ENCODE measurements at regions of chr12 and their contacts with region 1.

Region 1: GRCh38 chr12:6607751-6608591 is 792 bp upstream of the CHD4 start:
- DNase-seq: peak; percentile 49 to 87
- ATAC-seq: peak; percentile 43 to 69 (median 53)
- H3K4me3 ChIP-seq: no peak overlapping the region
- H3K4me3 Mint-ChIP-seq: no peak overlapping the region
- H3K27ac ChIP-seq: peak overlapping the region; percentile 97
- H3K27ac Mint-ChIP-seq: no peak overlapping the region
- H3K4me1 ChIP-seq: peaks cover 59% of the 10 kb centered on the region
- H3K4me1 Mint-ChIP-seq: peaks cover 40 to 53% of the 10 kb centered on the region in 2 donors
- H3K27me3 ChIP-seq: no peaks in the 10 kb centered on the region
- H3K27me3 Mint-ChIP-seq: no peaks in the 10 kb centered on the region
- CTCF ChIP-seq: no peak

Region 2: GRCh38 chr12:6563448-6564050 is 44.4 kb before region 1 on chr12:
- intact Hi-C with region 1: loop called (anchors 5 kb)
- DNase-seq: peak; percentile 60 to 84
- ATAC-seq: peak; percentile 21 to 49 (median 25)
- H3K4me3 ChIP-seq: no peak overlapping the region
- H3K4me3 Mint-ChIP-seq: no peak overlapping the region
- H3K27ac ChIP-seq: no peak overlapping the region
- H3K27ac Mint-ChIP-seq: peak overlapping the region; percentile 19 to 50
- H3K4me1 ChIP-seq: peaks cover 8% of the 10 kb centered on the region
- H3K4me1 Mint-ChIP-seq: peaks cover 34% of the 10 kb centered on the region in 2 donors
- H3K27me3 ChIP-seq: no peaks in the 10 kb centered on the region
- H3K27me3 Mint-ChIP-seq: no peaks in the 10 kb centered on the region
- CTCF ChIP-seq: peak; percentile 86

Measured in natural killer cell (primary cell).